ENCODE measurements at regions of chr1 and their contacts with region 1.

Region 1: GRCh38 chr1:87328272-87329050 is at the start of gene LMO4:
- DNase-seq: peak; percentile 97 to 98 (median 98)
- ATAC-seq: peak; percentile 91 to 94
- H3K4me3 ChIP-seq: peak within 1 kb of the TSS; percentile 87
- H3K27ac ChIP-seq: peak within 1 kb of the TSS; percentile 100
- H3K4me1 ChIP-seq: no peaks in the 10 kb centered on the region
- H3K27me3 ChIP-seq: no peaks in the 10 kb centered on the region
- total RNA-seq, gene LMO4: 46.0 to 61.4 (median 46.9) TPM

Region 2: GRCh38 chr1:87953732-87954344 is 625.4 kb after region 1 on chr1:
- intact Hi-C with region 1: loop called (anchors 5 to 10 kb)
- DNase-seq: peak; percentile 59 to 73 (median 70)
- ATAC-seq: peak; percentile 75 to 81
- H3K4me3 ChIP-seq: no peak overlapping the region
- H3K27ac ChIP-seq: no peak overlapping the region
- H3K4me1 ChIP-seq: peaks cover 6% of the 10 kb centered on the region
- H3K27me3 ChIP-seq: no peaks in the 10 kb centered on the region

Region 3: GRCh38 chr1:88061492-88062177 is 733.2 kb after region 1 on chr1:
- intact Hi-C with region 1: loop called in 3 of 4 experiments (anchors 10 kb)
- DNase-seq: peak; percentile 40 to 69 (median 49)
- ATAC-seq: peak; percentile 83 to 86
- H3K4me3 ChIP-seq: no peak overlapping the region
- H3K27ac ChIP-seq: no peak overlapping the region
- H3K4me1 ChIP-seq: no peaks in the 10 kb centered on the region
- H3K27me3 ChIP-seq: no peaks in the 10 kb centered on the region

Measured in right cardiac atrium (tissue), 5 donors.